Heart right ventricle (tissue), 16 donors: ENCODE measurements at regions of chr2 and their contacts with region 1.

Region 1: GRCh38 chr2:71510196-71510807 is 56.9 kb downstream of the DYSF start:
- DNase-seq: peak; percentile 72 to 74
- ATAC-seq: peak; percentile 33 to 71 (median 50)
- H3K4me3 ChIP-seq: no peak overlapping the region
- H3K27ac ChIP-seq: no peak overlapping the region
- H3K4me1 ChIP-seq: peaks cover 5 to 31% (median 14%) of the 10 kb centered on the region in 9 donors
- H3K27me3 ChIP-seq: no peaks in the 10 kb centered on the region
- CTCF ChIP-seq: peak; percentile 87 to 97 (median 92)

Region 2: DNA sequence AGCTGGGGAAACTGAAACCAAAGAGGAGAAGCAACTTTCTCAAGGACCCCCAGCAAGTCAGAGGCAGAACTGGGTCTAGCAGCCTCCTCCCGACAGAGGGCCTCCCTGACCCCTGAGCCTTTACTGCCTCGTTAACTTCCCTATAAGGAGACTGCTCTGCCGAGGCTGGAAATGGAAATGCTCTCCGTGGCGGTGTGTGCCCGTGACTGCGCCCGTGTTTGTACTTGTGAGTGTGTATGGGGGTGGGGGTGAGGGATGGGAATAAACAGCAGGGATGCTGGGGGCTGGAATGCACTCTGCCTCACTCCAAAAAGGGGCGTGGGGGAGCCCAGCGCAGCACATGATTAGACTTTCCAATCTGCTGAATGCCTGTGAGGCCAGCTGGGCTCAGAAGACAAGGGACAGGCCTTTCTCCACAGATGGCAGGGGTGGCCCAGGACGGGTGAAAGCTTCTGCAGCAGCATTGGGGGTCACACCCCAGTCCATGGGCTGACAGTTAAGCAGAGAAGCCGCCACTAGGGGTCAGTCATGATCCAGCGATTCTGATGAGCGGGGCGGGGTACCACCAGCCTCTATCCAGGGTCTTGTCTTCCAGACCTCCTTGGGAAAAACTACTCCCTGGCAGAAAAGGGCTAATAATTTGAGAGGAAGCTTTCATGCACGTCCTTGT is 353.0 kb before region 1 on chr2:
- intact Hi-C with region 1: loop called in 2 of 10 experiments (anchors 5 to 10 kb)
- DNase-seq: peak; percentile 29 to 43
- ATAC-seq: peak; percentile 58 to 86 (median 71)
- H3K4me3 ChIP-seq: peak overlapping the region in 4 of 10 donors; percentile 5 to 26 (median 17)
- H3K27ac ChIP-seq: no peak overlapping the region
- H3K4me1 ChIP-seq: peaks cover 0 to 11% (median 5%) of the 10 kb centered on the region in 9 donors
- H3K27me3 ChIP-seq: no peaks in the 10 kb centered on the region
- CTCF ChIP-seq: peak; percentile 29 to 72 (median 63)

Region 3: DNA sequence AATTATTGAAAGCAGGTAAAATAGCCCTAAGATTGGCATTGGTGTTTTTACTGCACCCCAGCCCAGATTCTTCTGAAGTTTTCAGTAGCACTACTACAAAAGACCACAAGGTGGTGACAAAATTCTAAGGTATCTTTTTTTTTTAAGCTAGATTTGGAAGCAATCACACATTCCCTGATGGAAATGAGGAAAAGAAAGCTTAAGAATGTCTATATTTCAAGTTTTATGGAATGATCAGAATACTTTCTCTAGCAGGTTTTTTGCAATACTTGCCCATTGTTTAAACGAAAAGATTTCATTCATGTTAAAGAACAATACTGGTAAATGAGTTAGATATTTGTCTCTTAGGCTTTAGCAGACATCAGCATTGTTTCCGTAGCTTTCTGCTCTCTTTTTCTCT is 210.8 kb before region 1 on chr2:
- intact Hi-C with region 1: loop called (anchors 2 to 10 kb)
- DNase-seq: no peak
- ATAC-seq: no peak
- H3K4me3 ChIP-seq: no peak overlapping the region
- H3K27ac ChIP-seq: no peak overlapping the region
- H3K4me1 ChIP-seq: peaks cover 0 to 6% (median 0%) of the 10 kb centered on the region in 9 donors
- H3K27me3 ChIP-seq: no peaks in the 10 kb centered on the region
- CTCF ChIP-seq: peak; percentile 46 to 77 (median 72)

Region 4: GRCh38 chr2:71306762-71307161 is 203.5 kb before region 1 on chr2:
- intact Hi-C with region 1: loop called in 4 of 10 experiments (anchors 5 to 10 kb)
- DNase-seq: no peak
- ATAC-seq: peak; percentile 55 to 94 (median 81)
- H3K4me3 ChIP-seq: no peak overlapping the region
- H3K27ac ChIP-seq: peak overlapping the region in 6 of 10 donors; percentile 27 to 57 (median 40)
- H3K4me1 ChIP-seq: peaks cover 0 to 21% (median 0%) of the 10 kb centered on the region in 9 donors
- H3K27me3 ChIP-seq: no peaks in the 10 kb centered on the region
- CTCF ChIP-seq: no peak

Region 5: GRCh38 chr2:71358931-71359671 is 151.2 kb before region 1 on chr2:
- intact Hi-C with region 1: loop called in 1 of 10 experiments (anchors 10 kb)
- DNase-seq: no peak
- ATAC-seq: peak in 2 of 8 donors; percentile 18 to 53
- H3K4me3 ChIP-seq: no peak overlapping the region
- H3K27ac ChIP-seq: no peak overlapping the region
- H3K4me1 ChIP-seq: peaks cover 0 to 30% (median 6%) of the 10 kb centered on the region in 9 donors
- H3K27me3 ChIP-seq: no peaks in the 10 kb centered on the region
- CTCF ChIP-seq: no peak

Region 6: DNA sequence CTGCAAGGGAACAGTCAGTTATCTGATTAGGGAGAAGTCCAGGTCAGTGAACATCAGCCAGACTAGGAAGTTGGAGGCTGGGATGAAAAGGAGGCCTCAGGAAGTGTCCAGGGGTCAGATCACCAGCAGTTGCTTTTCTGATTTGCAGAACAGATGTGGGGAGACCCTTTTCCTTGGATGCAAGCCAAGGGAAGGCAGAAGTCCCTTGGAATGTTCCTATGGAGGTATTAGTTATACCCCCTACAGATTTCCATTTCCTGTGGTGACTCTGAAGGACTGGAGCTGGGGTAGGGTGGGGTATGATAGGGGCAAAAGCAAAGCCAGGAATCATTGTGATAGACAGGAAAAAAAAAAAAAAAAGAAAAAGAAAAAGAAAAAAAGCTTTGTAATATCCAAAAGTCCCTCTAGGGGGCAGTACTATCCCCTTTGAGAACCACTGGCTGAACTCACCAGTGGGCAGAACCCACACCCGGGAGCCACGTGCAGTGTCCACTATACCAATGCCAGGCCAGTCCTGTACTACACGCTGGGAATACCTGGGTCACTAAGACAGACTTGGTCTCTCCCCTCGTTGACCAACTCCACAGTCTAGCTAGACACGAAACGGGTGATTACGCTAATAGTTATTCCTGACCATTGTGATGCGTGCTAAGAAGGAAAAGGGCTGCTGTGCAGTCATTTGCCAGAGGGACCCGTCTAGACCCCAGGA is 49.6 kb before region 1 on chr2:
- intact Hi-C with region 1: loop called in 8 of 10 experiments (anchors 1 to 5 kb)
- DNase-seq: peak in 1 of 2 donors; percentile 41
- ATAC-seq: peak in 7 of 8 donors; percentile 13 to 45 (median 34)
- H3K4me3 ChIP-seq: no peak overlapping the region
- H3K27ac ChIP-seq: peak overlapping the region in 6 of 10 donors; percentile 17 to 92 (median 68)
- H3K4me1 ChIP-seq: peaks cover 15 to 93% (median 71%) of the 10 kb centered on the region in 9 donors
- H3K27me3 ChIP-seq: peaks cover 0 to 15% (median 0%) of the 10 kb centered on the region in 7 donors
- CTCF ChIP-seq: peak; percentile 58 to 78 (median 69)